ENCODE measurements at regions of chr12 and their contacts with region 1.

Region 1: GRCh38 chr12:6613776-6614512 is 6.8 kb upstream of the CHD4 start:
- DNase-seq: peak; percentile 92
- ATAC-seq: peak; percentile 89

Region 2: GRCh38 chr12:6662906-6663742 is 49.2 kb after region 1 on chr12 and contains the start of gene ING4:
- intact Hi-C with region 1: loop called (anchors 5 kb)
- DNase-seq: peak; percentile 99
- ATAC-seq: peak; percentile 100
- total RNA-seq, gene ING4: 21.1 TPM

Region 3: DNA sequence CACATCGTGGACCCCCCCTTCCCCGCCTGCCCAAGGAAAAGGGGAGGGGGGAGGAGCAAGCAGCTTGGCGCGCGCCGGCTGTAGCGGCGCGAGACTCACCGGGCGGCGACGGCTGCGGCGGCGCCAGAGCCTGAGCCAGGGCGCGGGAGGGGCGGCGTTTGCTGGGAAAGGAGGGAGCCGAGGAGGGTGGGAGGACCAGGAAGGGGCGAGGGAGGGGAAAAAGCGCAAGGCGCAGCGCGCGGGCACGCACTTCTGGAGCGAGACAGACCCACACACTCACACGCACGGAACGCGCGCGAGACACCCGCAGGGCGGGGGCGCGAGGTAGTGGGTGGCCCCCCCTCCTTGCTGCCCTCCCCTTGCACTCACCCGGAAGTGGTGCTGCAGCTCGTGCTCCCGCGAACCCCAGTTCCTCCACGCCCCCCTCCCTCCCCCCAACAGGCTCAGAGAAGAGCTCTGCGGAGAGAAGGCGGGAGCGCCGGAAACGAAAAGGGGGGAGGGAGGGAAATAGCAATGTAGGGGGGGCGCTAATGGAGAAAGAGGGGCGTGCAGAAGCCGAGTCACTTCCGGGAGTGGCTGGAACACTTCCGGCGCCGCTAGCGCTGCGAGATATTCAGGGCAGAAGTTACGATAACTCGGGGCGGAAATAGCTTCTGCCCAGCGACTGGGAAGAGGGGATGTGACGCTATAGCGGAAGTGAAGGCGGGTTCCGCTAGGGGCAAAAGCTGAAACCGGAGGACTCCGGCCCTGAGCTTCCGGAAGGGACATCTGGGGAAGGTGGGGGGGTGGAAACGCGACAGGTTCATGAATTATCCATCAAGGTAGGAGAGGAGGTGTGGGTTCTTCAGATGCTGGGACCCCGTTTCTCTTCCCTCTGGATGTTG is 75.3 kb after region 1 on chr12 and contains the start of gene ZNF384:
- intact Hi-C with region 1: loop called (anchors 2 kb)
- DNase-seq: peak; percentile 97
- ATAC-seq: peak; percentile 94
- total RNA-seq, gene ZNF384: 26.0 TPM

Region 4: GRCh38 chr12:6778574-6779550 is 164.9 kb after region 1 on chr12:
- intact Hi-C with region 1: loop called (anchors 5 kb)
- DNase-seq: peak; percentile 94
- ATAC-seq: peak; percentile 97

Region 5: DNA sequence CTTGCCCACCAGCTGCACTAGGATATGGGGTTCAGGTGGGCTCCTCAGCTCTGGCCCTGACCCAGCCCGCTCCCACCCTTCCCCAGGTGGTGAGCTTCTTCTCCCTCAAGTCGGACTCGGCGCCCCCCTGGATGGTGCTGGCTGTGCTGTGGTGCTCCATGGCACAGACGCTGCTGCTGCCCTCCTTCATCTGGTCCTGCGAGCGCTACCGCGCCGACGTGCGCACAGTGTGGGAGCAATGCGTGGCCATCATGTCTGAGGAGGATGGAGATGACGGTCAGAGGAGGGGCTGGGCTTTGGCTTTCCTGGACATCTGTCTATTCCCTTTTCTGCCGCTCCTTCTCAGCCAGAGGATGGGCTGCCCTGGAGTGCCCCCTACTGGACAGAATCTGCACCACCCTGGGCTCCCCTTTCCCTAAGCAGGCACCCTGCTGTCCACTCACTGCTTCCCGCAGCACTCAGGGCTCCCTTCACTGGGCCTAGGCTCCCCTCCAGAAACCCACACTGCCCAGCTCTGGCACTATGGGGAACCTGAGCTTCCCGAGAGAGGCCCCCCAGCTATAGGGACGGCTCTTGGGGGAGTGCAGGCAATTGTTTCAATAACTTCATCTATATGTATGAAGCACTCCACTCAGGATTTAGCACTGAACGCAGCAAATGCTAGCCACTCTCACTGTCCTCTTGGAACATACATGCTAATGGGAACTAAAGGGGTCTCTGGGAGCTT is 211.6 kb after region 1 on chr12:
- intact Hi-C with region 1: loop called (anchors 5 kb)
- DNase-seq: peak; percentile 89
- ATAC-seq: peak; percentile 58